ENCODE measurements at regions of chr20 and their contacts with region 1.

Region 1: DNA sequence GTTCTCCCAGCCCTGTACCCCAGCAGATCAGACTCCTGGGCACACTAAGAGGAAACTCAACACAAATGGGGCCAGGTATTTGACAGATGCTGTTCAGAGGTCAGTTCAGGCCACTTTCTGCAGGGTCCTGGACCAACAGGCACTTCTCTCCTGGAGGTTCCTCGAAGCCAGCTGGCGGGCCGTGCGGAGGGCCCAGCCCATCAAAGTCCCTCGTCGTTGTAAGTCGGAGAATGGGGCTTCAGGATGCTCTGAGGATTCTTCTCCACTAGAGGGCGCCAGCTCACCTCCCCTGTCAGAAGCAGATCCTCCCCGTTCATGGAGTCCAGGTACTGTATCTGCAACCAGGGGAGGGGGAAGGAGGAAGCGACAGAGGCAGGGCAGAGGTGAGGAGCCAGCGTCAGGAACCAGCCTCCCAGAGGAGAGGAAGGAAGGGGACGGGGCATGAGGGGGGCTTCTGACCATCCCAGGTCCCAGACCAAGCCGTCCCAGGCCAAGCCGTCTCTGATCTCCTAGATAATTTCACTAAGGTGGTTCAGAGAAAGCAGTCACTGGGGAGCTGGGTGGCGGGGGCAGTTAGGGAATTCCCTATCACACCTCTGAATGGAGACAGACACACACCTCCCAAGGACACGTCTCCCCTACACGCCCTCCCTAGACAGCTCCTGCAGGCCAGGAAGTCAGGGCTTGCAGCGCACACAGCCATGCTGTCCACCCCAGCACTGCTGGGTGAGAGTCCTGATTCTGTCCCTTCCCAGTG is 11.7 kb upstream of the FAM83C start:
- DNase-seq: peak; percentile 26
- H3K4me3 ChIP-seq: no peak overlapping the region
- H3K27ac ChIP-seq: peak overlapping the region; percentile 87 to 90 (median 88)
- H3K4me1 ChIP-seq: peaks cover 50 to 69% (median 50%) of the 10 kb centered on the region in 3 donors
- H3K27me3 ChIP-seq: no peaks in the 10 kb centered on the region
- CTCF ChIP-seq: peak; percentile 82 to 96 (median 92)
- POLR2A ChIP-seq: no peak

Region 2: DNA sequence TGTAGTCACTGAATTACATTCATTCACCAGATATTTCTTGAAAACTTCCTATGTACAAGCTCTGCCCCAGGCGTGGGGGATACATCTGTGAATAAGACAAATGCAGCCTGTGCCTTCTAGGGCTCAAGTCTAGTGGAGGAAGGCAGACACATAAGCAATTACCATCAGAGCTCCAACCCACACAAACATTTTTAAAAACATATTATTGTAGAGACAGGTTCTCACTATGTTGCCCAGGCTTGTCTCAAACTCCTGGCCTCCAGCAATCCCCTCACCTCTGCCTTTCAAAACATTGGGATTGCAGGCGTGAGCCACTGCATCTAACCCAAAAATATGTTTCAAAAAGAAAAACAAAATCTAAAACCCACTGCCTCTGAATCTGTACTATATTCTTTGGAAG is 201.5 kb before region 1 on chr20:
- intact Hi-C with region 1: no loop called
- DNase-seq: no peak
- H3K4me3 ChIP-seq: no peak overlapping the region
- H3K27ac ChIP-seq: no peak overlapping the region
- H3K4me1 ChIP-seq: no peaks in the 10 kb centered on the region
- H3K27me3 ChIP-seq: peaks cover 0 to 5% (median 0%) of the 10 kb centered on the region in 4 donors
- CTCF ChIP-seq: no peak
- POLR2A ChIP-seq: no peak

Region 3: GRCh38 chr20:35192111-35192872 is 111.6 kb before region 1 on chr20:
- intact Hi-C with region 1: no loop called
- DNase-seq: no peak
- H3K4me3 ChIP-seq: no peak overlapping the region
- H3K27ac ChIP-seq: no peak overlapping the region
- H3K4me1 ChIP-seq: peaks cover 0 to 14% (median 0%) of the 10 kb centered on the region in 3 donors
- H3K27me3 ChIP-seq: no peaks in the 10 kb centered on the region
- CTCF ChIP-seq: no peak
- POLR2A ChIP-seq: no peak

Region 4: DNA sequence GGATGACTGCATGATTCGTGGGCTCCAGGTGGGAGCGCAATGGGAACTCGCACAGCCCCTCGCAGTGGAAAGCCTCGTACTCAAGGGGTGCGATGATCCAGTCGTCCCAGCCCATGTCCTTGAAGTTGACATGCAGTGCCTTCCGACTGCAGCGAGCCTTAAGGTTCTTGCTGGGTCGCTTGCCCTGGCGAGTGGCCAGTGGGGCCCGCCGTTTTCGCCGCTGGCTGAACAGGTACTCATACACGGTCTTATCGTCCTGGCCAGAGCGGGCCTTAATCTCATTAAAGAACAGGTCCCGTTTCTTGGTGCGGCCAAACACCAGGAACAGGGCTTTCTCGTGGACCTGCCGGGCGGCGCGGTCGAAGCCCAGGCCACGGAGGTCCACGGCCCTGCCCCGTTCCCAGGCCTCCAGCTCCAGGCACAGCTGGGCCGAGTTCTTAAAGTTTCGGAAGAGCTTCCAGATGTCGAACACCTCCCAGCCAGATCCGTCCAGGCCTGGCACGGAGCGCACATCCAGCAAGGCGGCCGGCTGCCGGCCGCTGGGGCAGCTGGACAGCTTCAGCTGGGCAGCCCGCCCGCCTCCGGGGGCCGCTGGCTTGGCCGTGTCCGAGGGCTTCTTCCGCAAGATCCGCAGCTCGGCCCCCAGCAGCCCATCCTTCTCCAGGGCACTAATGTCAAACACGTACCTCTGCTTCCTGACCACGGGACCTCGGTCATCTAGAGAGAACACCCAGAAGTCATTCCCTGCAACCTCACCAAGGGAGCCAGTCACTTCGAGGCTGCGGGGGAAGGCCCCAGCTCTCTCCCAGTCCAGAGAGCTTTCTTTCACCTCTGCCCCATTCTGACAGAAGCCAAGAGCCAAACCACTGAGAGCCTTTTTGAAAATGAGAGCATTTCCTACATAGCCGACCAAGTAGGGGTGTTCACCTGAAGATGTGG is 130.4 kb after region 1 on chr20:
- intact Hi-C with region 1: loop called (anchors 5 kb)
- DNase-seq: no peak
- H3K4me3 ChIP-seq: no peak overlapping the region
- H3K27ac ChIP-seq: no peak overlapping the region
- H3K4me1 ChIP-seq: peaks cover 3 to 19% (median 9%) of the 10 kb centered on the region in 3 donors
- H3K27me3 ChIP-seq: no peaks in the 10 kb centered on the region
- CTCF ChIP-seq: no peak
- POLR2A ChIP-seq: no peak

Measured in esophagus squamous epithelium (tissue), 5 donors.